ENCODE measurements at regions of chr2 and their contacts with region 1.

Region 1: DNA sequence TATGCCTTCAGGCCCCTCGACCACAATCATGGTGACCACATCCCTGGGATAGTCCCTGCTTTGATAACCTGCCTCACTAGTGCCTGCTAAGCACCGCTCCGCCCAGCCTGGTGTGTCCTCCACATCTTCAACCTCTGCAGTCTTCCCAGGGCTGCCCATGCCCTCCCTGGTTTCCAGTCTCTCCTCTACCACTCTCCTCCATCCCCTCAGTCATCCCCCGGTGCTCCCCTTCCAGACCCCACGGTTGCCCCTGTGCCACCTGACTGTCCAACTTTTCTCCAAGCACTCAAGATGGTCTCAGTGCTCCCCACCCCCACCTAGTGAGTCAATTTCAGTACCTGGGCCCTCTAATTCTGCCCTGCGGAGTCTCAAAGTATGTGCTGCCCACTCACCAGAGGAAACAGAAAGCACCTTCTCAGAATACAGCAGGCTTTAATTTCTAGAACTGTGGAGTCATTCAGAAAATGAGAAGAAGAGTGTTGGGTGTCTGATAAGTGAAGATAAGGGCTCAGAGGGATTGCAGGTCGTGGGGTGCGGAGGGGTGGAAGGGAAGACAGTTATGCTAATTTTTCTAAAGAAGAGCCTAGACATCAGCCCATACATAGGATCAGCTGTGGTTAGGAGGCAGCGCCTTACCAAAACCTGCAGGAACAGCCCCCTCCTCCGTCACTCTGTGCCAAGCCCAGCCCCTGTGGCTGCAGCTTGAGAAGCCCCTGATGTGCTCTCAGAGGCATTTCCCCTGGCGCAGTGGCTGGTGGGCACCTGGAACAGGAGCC is 53.6 kb upstream of the CAB39 start:
- DNase-seq: peak; percentile 85
- H3K4me3 Mint-ChIP-seq: peak overlapping the region; percentile 85
- H3K27ac Mint-ChIP-seq: peak overlapping the region; percentile 99
- H3K4me1 Mint-ChIP-seq: peaks cover 94% of the 10 kb centered on the region
- H3K27me3 Mint-ChIP-seq: no peaks in the 10 kb centered on the region

Region 2: DNA sequence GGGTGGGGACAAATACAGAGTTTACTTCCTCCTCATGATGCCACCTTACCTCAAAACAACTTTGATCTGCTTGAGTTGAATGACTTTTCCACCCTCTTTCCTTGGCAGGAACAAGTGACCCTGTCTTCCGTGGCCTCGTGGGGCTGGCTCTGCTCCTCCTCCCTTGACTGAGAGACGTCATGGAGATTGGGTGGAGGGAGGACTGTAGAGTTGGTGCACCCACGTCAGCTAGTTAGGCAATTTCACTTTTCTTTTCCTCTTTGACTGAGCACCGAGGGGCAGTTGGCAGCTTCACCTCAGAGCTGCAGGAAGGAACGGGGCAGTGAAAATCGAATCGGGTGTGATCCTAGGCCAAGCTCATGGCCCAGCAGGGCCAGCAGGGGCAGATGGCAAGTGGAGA is 433.6 kb before region 1 on chr2 and contains the start of gene SP140:
- CTCF ChIA-PET with region 1: no interaction called
- POLR2A ChIA-PET with region 1: interaction called, 11 read pairs
- DNase-seq: peak; percentile 88
- H3K4me3 Mint-ChIP-seq: peak within 1 kb of the TSS; percentile 77
- H3K27ac Mint-ChIP-seq: peak within 1 kb of the TSS; percentile 94
- H3K4me1 Mint-ChIP-seq: peaks cover 64% of the 10 kb centered on the region
- H3K27me3 Mint-ChIP-seq: no peaks in the 10 kb centered on the region
- total RNA-seq, gene SP140: 132 to 137 TPM

Region 3: DNA sequence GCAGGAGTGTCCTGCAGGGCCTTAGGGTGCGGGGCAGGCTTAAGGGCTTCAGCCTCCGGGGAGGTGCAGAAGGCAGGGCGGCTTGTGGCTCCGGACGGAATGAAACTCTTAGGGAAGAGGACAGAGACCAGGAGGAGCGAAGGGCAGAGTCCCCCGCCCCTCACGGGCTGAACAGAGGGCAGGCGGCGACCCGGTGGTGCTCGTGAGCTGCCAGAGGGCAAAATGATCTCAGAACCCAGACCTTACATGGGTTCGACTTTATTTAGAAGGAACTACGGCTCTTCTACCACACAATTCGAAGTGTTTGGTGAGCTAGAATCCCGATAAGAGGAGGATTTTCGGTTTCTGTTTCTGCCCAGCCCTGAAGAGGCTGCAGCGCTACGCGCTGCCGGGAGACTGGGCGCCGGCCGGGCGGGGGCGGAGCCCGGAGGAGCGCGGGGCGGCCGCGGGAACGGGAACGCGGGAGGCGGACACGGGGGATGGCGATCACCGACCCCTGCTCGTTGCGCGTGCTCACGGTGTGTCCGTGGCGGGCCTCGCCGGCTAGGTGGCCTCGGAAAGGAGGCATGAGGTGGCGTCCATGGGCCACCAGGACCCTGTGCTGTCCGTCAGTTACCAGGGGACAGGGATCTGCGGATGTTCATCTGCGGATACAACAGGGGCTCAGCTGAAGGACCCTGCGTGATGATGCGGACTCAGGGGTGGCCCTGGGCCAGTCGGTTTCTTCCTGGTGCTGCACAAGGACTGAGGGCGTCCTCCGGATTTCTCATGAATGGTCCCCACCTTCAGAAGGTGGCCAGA is 247.3 kb before region 1 on chr2:
- CTCF ChIA-PET with region 1: no interaction called
- POLR2A ChIA-PET with region 1: interaction called, 24 read pairs
- DNase-seq: peak; percentile 76
- H3K4me3 Mint-ChIP-seq: peak overlapping the region; percentile 98
- H3K27ac Mint-ChIP-seq: peak overlapping the region; percentile 100
- H3K4me1 Mint-ChIP-seq: peaks cover 61% of the 10 kb centered on the region
- H3K27me3 Mint-ChIP-seq: no peaks in the 10 kb centered on the region

Region 4: DNA sequence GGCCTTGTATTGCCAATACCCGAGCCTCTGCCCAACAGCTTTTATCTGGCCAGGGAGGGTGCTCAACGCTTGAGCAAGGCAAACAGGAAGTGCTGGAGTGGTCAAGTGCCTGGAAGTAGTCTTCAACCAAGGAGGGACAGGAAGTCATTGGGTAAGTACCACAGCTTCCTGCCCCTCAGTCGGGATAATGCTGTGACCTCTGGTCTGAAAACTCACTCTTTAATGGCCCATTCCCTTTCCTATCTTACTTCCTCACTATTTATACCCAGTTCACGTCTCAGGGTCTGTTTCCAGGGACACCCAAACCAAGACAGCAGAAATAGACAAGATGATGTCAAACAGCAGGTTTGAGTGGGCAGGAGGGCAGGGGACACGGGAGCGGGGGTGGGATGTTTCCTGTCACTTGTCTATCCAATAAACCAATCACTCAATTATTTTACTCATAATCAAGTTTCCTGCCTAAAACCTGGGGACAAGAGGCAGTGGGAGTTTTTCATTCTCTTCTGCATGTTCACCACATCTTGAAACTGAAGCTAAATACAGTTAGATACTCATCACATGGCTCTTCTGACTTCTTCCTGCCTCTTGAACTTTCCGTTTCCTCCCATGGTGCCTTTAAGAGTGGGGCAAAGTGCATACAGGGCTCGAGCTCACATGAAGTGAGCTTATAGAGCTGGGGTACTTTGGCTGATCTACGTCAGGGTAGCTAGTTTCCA is 15.3 kb before region 1 on chr2:
- CTCF ChIA-PET with region 1: interaction called, 15 read pairs
- POLR2A ChIA-PET with region 1: interaction called, 111 read pairs
- DNase-seq: peak; percentile 51
- H3K4me3 Mint-ChIP-seq: peak overlapping the region; percentile 34
- H3K27ac Mint-ChIP-seq: peak overlapping the region; percentile 90
- H3K4me1 Mint-ChIP-seq: peaks cover 38% of the 10 kb centered on the region
- H3K27me3 Mint-ChIP-seq: no peaks in the 10 kb centered on the region

Region 5: GRCh38 chr2:230680463-230681170 is 21.6 kb after region 1 on chr2:
- CTCF ChIA-PET with region 1: interaction called, 27 read pairs
- POLR2A ChIA-PET with region 1: interaction called, 43 read pairs
- DNase-seq: no peak
- H3K4me3 Mint-ChIP-seq: no peak overlapping the region
- H3K27ac Mint-ChIP-seq: no peak overlapping the region
- H3K4me1 Mint-ChIP-seq: peaks cover 60% of the 10 kb centered on the region
- H3K27me3 Mint-ChIP-seq: no peaks in the 10 kb centered on the region

Region 6: DNA sequence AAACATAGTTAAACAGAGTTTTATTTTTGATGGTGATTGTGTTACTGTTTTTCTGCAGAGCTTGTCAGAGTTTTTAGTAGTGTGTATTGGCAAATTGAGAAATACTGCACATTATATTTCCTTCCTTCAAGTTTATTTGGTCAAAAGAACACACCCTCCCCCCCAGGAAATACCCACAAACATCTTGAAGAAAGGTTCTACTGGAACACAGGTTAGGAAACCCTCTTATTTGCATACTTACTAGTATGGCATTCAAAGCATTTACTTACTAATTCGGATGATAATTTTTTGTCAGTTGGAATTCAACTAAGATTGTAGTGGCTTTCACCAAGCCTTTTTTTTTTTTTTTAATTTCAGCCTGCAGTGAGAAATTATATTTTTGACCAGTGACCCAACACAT is 62.6 kb after region 1 on chr2:
- CTCF ChIA-PET with region 1: interaction called, 3 read pairs
- POLR2A ChIA-PET with region 1: interaction called, 35 read pairs
- DNase-seq: no peak
- H3K4me3 Mint-ChIP-seq: peak overlapping the region; percentile 38
- H3K27ac Mint-ChIP-seq: peak overlapping the region; percentile 79
- H3K4me1 Mint-ChIP-seq: peaks cover 79% of the 10 kb centered on the region
- H3K27me3 Mint-ChIP-seq: no peaks in the 10 kb centered on the region

Region 7: GRCh38 chr2:230798769-230799399 is 139.8 kb after region 1 on chr2:
- CTCF ChIA-PET with region 1: interaction called, 11 read pairs
- POLR2A ChIA-PET with region 1: interaction called, 11 read pairs
- DNase-seq: peak; percentile 48
- H3K4me3 Mint-ChIP-seq: no peak overlapping the region
- H3K27ac Mint-ChIP-seq: peak overlapping the region; percentile 66
- H3K4me1 Mint-ChIP-seq: peaks cover 37% of the 10 kb centered on the region
- H3K27me3 Mint-ChIP-seq: no peaks in the 10 kb centered on the region

Measured in activated CD4-positive, alpha-beta memory T cell treated with anti-CD3 and anti-CD28 coated beads, Interleukin-2, amount 10 ng/mL, durations not matched to agents 7 days and 5 days (primary cell).